ENCODE measurements at regions of chr1 and their contacts with region 1.

Region 1: GRCh38 chr1:26853156-26853555 is 9.8 kb upstream of the SFN start:
- DNase-seq: peak; percentile 76
- ATAC-seq: peak; percentile 90
- H3K4me3 ChIP-seq: no peak overlapping the region
- H3K27ac ChIP-seq: no peak overlapping the region
- H3K4me1 ChIP-seq: peaks cover 17% of the 10 kb centered on the region
- H3K27me3 ChIP-seq: no peaks in the 10 kb centered on the region
- CTCF ChIP-seq: peak; percentile 93
- EP300 ChIP-seq: no peak
- POLR2A ChIP-seq: no peak
- RAD21 ChIP-seq: peak; percentile 90

Region 2: GRCh38 chr1:26864610-26865527 is 11.7 kb after region 1 on chr1:
- CTCF ChIA-PET with region 1: no interaction called
- POLR2A ChIA-PET with region 1: interaction called, 16 read pairs
- in situ Hi-C with region 1: no loop called
- intact Hi-C with region 1: no loop called
- DNase-seq: peak; percentile 93
- ATAC-seq: peak; percentile 94
- H3K4me3 ChIP-seq: peak overlapping the region; percentile 70 to 79 (median 70)
- H3K27ac ChIP-seq: peak overlapping the region; percentile 79
- H3K4me1 ChIP-seq: peaks cover 63% of the 10 kb centered on the region
- H3K27me3 ChIP-seq: no peaks in the 10 kb centered on the region
- CTCF ChIP-seq: no peak; the same call in 1 of the 2 replicates
- EP300 ChIP-seq: no peak
- POLR2A ChIP-seq: peak; percentile 97
- RAD21 ChIP-seq: peak; percentile 7; the same call in 1 of the 2 replicates

Region 3: GRCh38 chr1:26874896-26875295 is 21.7 kb after region 1 on chr1:
- CTCF ChIA-PET with region 1: interaction called, 26 read pairs
- POLR2A ChIA-PET with region 1: no interaction called
- in situ Hi-C with region 1: no loop called
- intact Hi-C with region 1: loop called (anchors 1 kb)
- DNase-seq: no peak
- ATAC-seq: no peak
- H3K4me3 ChIP-seq: no peak overlapping the region
- H3K27ac ChIP-seq: no peak overlapping the region
- H3K4me1 ChIP-seq: peaks cover 9% of the 10 kb centered on the region
- H3K27me3 ChIP-seq: no peaks in the 10 kb centered on the region
- CTCF ChIP-seq: no peak
- EP300 ChIP-seq: no peak
- POLR2A ChIP-seq: no peak
- RAD21 ChIP-seq: no peak

Region 4: GRCh38 chr1:26932531-26932930 is 79.4 kb after region 1 on chr1:
- CTCF ChIA-PET with region 1: no interaction called
- POLR2A ChIA-PET with region 1: no interaction called
- in situ Hi-C with region 1: no loop called
- intact Hi-C with region 1: no loop called
- DNase-seq: no peak
- ATAC-seq: no peak
- H3K4me3 ChIP-seq: no peak overlapping the region
- H3K27ac ChIP-seq: no peak overlapping the region
- H3K4me1 ChIP-seq: peaks cover 14% of the 10 kb centered on the region
- H3K27me3 ChIP-seq: no peaks in the 10 kb centered on the region
- CTCF ChIP-seq: no peak
- EP300 ChIP-seq: no peak
- POLR2A ChIP-seq: no peak
- RAD21 ChIP-seq: no peak